AG04449 (cell line): ENCODE measurements at regions of chr2 and their contacts with region 1.

Region 1: GRCh38 chr2:63488118-63488713 is 100.1 kb downstream of the WDPCP start:
- DNase-seq: no peak
- H3K4me3 ChIP-seq: no peak overlapping the region
- CTCF ChIP-seq: peak; percentile 61

Region 2: GRCh38 chr2:62787386-62787785 is 700.8 kb before region 1 on chr2:
- CTCF ChIA-PET with region 1: interaction called, 13 read pairs
- POLR2A ChIA-PET with region 1: no interaction called
- DNase-seq: no peak
- H3K4me3 ChIP-seq: no peak overlapping the region
- CTCF ChIP-seq: peak; percentile 6

Region 3: GRCh38 chr2:63477686-63478085 is 10.5 kb before region 1 on chr2:
- CTCF ChIA-PET with region 1: interaction called, 25 read pairs
- POLR2A ChIA-PET with region 1: no interaction called
- DNase-seq: no peak
- H3K4me3 ChIP-seq: no peak overlapping the region
- CTCF ChIP-seq: no peak

Region 4: DNA sequence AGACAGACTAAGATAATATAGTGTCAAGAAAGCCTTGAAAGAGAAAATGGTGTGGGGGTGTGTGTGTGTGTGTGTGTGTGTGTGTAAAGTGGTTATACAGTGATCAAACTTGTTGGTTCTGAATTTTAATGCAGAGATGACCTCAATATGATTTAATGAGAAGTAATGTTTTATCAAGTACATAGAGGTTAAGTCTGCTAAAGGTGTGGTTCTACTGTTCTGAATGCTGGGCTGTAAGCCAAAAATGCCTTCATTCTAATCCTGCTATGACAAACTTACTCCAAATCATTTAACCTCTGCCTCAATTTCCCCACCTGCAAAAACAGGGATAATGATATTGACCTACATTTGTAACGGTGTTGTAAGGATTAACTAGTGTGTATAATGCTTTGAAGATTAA is 12.2 kb after region 1 on chr2:
- CTCF ChIA-PET with region 1: interaction called, 47 read pairs
- POLR2A ChIA-PET with region 1: interaction called, 3 read pairs
- DNase-seq: no peak
- H3K4me3 ChIP-seq: no peak overlapping the region
- CTCF ChIP-seq: no peak

Region 5: GRCh38 chr2:63805412-63805811 is 317.2 kb after region 1 on chr2:
- CTCF ChIA-PET with region 1: no interaction called
- POLR2A ChIA-PET with region 1: no interaction called
- DNase-seq: no peak
- H3K4me3 ChIP-seq: no peak overlapping the region
- CTCF ChIP-seq: no peak